Common myeloid progenitor, CD34-positive (primary cell): ENCODE measurements at regions of chr4 and their contacts with region 1.

Region 1: GRCh38 chr4:9762823-9763475 is 18.5 kb upstream of the DRD5 start:
- DNase-seq: peak; percentile 67 to 87 (median 86)
- H3K4me3 ChIP-seq: no peak overlapping the region
- H3K27ac ChIP-seq: no peak overlapping the region
- H3K4me1 ChIP-seq: no peaks in the 10 kb centered on the region
- H3K27me3 ChIP-seq: peaks cover 0 to 15% (median 0%) of the 10 kb centered on the region in 5 experiments

Region 2: DNA sequence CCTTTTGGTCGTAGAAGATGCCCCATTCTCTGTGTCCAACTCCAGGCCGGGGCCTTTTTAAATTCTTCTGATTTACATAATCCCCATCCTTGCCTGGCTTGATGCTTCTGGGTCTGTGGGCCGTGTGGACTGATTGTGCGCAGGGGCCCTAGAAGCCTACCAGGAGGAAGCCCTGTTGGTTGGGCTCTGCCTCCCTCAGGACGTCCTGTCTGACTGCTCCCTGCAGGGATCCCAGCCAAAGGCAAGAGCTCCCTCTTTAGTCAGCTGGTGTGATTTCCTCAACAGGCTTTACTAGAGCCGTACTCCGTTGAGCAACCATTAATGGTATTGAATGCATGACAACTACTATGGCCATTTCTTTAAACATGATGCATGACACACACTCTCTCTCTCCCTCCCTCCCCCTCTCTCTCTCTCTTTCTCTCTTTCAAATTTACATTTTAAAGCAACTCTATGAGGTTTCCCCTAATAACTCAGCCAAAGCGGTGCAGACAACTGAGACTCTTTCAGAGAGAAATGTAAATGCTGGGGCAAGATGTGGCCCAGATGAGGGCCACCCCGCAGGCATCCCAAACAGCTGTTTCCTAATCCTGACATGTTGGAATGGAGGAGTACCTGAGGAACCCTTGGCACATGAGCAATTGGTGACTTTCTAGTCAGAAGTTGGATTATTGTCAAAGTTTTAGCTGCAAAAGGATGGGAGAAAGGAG is 135.8 kb after region 1 on chr4:
- CTCF ChIA-PET with region 1: interaction called, 15 read pairs
- POLR2A ChIA-PET with region 1: no interaction called
- DNase-seq: peak; percentile 10 to 36 (median 32)
- H3K4me3 ChIP-seq: no peak overlapping the region
- H3K27ac ChIP-seq: no peak overlapping the region
- H3K4me1 ChIP-seq: no peaks in the 10 kb centered on the region
- H3K27me3 ChIP-seq: no peaks in the 10 kb centered on the region